Psoas muscle (tissue), 8 donors: ENCODE measurements at regions of chr18 and their contacts with region 1.

Region 1: GRCh38 chr18:32470713-32471633 is at the start of gene GAREM1:
- DNase-seq: peak; percentile 95 to 98
- ATAC-seq: peak; percentile 93 to 97 (median 96)
- H3K4me3 ChIP-seq: peak within 1 kb of the TSS; percentile 78
- H3K27ac ChIP-seq: peak within 1 kb of the TSS; percentile 79
- H3K4me1 ChIP-seq: peaks cover 13% of the 10 kb centered on the region
- H3K27me3 ChIP-seq: no peaks in the 10 kb centered on the region
- CTCF ChIP-seq: peak; percentile 89
- total RNA-seq, gene GAREM1: 7.2 to 10.3 (median 9.5) TPM

Region 2: GRCh38 chr18:32092422-32093101 is 378.4 kb before region 1 on chr18:
- intact Hi-C with region 1: loop called in 1 of 2 experiments (anchors 10 kb)
- DNase-seq: peak; percentile 99 to 100
- ATAC-seq: peak; percentile 96 to 98 (median 97)
- H3K4me3 ChIP-seq: peak overlapping the region; percentile 97
- H3K27ac ChIP-seq: peak overlapping the region; percentile 100
- H3K4me1 ChIP-seq: peaks cover 36% of the 10 kb centered on the region
- H3K27me3 ChIP-seq: no peaks in the 10 kb centered on the region
- CTCF ChIP-seq: no peak

Region 3: GRCh38 chr18:32271672-32272208 is 199.2 kb before region 1 on chr18:
- intact Hi-C with region 1: loop called (anchors 2 to 5 kb)
- DNase-seq: no peak
- ATAC-seq: peak; percentile 67 to 87 (median 70)
- H3K4me3 ChIP-seq: no peak overlapping the region
- H3K27ac ChIP-seq: no peak overlapping the region
- H3K4me1 ChIP-seq: no peaks in the 10 kb centered on the region
- H3K27me3 ChIP-seq: no peaks in the 10 kb centered on the region
- CTCF ChIP-seq: peak; percentile 72

Region 4: GRCh38 chr18:32383050-32383819 is 87.7 kb before region 1 on chr18:
- intact Hi-C with region 1: loop called in 1 of 2 experiments (anchors 5 kb)
- DNase-seq: no peak
- ATAC-seq: peak; percentile 77 to 82 (median 80)
- H3K4me3 ChIP-seq: no peak overlapping the region
- H3K27ac ChIP-seq: peak overlapping the region; percentile 24
- H3K4me1 ChIP-seq: peaks cover 7% of the 10 kb centered on the region
- H3K27me3 ChIP-seq: no peaks in the 10 kb centered on the region
- CTCF ChIP-seq: no peak

Region 5: GRCh38 chr18:32552421-32553030 is 81.6 kb after region 1 on chr18:
- intact Hi-C with region 1: loop called in 1 of 2 experiments (anchors 5 kb)
- DNase-seq: no peak
- ATAC-seq: peak; percentile 71 to 90 (median 81)
- H3K4me3 ChIP-seq: no peak overlapping the region
- H3K27ac ChIP-seq: no peak overlapping the region
- H3K4me1 ChIP-seq: no peaks in the 10 kb centered on the region
- H3K27me3 ChIP-seq: no peaks in the 10 kb centered on the region
- CTCF ChIP-seq: peak; percentile 90